Posterior cingulate gyrus (tissue), 11 donors: ENCODE measurements at regions of chr17 and their contacts with region 1.

Region 1: DNA sequence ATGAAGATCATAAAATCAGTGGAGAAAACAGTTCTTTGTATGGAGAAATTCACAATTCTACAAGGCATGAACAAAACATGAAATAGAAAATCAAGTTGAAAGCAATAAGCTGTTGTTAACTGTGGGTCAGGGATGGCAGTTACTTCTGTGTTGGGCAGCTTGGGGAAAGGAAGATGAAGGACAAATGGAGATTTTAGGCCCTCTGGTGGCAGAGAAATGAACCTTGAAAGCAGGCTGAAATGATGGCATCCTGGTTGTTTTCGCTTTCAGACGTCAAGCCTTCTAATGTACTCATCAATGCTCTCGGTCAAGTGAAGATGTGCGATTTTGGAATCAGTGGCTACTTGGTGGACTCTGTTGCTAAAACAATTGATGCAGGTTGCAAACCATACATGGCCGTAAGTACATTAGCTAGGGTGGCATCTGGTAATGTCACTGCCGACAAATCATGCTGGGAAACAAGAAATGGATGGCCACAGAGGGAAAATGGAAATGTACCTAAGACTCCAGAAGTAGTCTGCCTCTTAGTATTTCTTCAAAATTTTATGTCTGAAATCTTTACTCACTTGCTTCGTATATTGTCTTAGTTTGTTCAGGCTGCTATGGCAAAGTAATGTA is 108.9 kb downstream of the MAP2K6 start:
- DNase-seq: peak in 4 of 10 donors; percentile 20 to 45 (median 28)

Region 2: GRCh38 chr17:68771867-68772515 is 751.4 kb before region 1 on chr17:
- intact Hi-C with region 1: loop called (anchors 10 kb)
- DNase-seq: peak in 1 of 10 donors; percentile 33

Region 3: GRCh38 chr17:69335058-69335457 is 188.3 kb before region 1 on chr17:
- intact Hi-C with region 1: loop called (anchors 2 kb)
- DNase-seq: no peak

Region 4: GRCh38 chr17:69414408-69415274 is 108.7 kb before region 1 on chr17 and contains the start of gene MAP2K6:
- intact Hi-C with region 1: loop called (anchors 10 kb)
- DNase-seq: peak; percentile 79 to 97 (median 86)

Region 5: GRCh38 chr17:69567130-69567529 is 43.8 kb after region 1 on chr17:
- intact Hi-C with region 1: no loop called
- DNase-seq: no peak

Region 6: DNA sequence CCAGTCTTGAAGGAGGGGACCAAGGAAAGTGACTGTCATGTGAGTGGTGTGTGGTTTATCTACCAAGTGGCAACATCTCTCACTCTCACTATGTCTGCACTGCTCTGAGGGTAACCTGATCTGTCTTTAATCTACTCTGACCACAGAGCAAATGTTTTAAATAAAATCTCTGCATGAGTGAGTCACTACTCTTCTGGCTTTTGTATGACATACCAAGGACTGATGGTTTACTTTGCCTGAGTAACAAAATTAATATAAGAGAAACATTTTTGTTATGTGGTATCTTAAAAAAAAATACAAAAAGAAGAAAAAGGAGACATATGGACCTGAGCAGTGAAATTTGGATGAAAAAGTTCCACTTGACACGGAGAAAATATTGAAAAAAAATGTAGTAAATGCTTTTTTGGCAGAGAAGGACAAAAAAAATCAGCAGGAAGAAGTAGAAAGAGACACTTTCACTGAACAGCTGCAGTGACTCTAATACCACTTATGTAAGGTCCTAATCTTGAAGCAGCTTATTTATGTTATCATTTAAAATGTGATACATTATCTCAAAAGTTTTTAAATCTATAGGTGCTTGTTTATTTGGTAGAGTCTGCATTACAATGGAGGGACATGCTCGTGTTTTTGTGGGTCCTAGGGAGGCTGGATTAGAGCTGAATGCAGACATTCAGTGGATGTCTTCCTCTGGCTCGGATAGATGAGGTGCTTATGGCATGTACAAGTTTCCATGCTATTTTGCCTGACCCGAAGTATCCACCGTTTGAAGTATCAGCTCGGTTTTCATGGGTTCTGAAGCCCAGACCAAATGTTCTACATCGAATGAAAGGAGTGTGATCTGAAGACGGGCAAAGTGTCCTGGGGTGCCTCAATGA is 131.9 kb after region 1 on chr17:
- intact Hi-C with region 1: no loop called
- DNase-seq: no peak